Activated T-helper 1 cell treated with anti-CD3 and anti-CD28 coated beads, Interleukin-12 subunit alpha, Interleukin-12 subunit beta, Interleukin-2, Interleukin-4 antibody, amounts not matched to agents 30 ng/mL and 10 ng/mL and 1 ng/mL, durations not matched to agents 14 hours and 24 hours and 36 hours (primary cell): ENCODE measurements at regions of chr16 and their contacts with region 1.

Region 1: GRCh38 chr16:69465083-69465721 is 40.8 kb downstream of the CYB5B start:
- DNase-seq: peak; percentile 18
- H3K4me3 Mint-ChIP-seq: peak overlapping the region; percentile 45
- H3K27ac Mint-ChIP-seq: peak overlapping the region; percentile 75
- H3K4me1 Mint-ChIP-seq: peaks cover 55% of the 10 kb centered on the region
- H3K27me3 Mint-ChIP-seq: no peaks in the 10 kb centered on the region

Region 2: GRCh38 chr16:69443927-69444631 is 21.1 kb before region 1 on chr16:
- intact Hi-C with region 1: loop called (anchors 2 kb)
- DNase-seq: no peak
- H3K4me3 Mint-ChIP-seq: peak overlapping the region; percentile 74
- H3K27ac Mint-ChIP-seq: peak overlapping the region; percentile 90
- H3K4me1 Mint-ChIP-seq: peaks cover 54% of the 10 kb centered on the region
- H3K27me3 Mint-ChIP-seq: no peaks in the 10 kb centered on the region

Region 3: DNA sequence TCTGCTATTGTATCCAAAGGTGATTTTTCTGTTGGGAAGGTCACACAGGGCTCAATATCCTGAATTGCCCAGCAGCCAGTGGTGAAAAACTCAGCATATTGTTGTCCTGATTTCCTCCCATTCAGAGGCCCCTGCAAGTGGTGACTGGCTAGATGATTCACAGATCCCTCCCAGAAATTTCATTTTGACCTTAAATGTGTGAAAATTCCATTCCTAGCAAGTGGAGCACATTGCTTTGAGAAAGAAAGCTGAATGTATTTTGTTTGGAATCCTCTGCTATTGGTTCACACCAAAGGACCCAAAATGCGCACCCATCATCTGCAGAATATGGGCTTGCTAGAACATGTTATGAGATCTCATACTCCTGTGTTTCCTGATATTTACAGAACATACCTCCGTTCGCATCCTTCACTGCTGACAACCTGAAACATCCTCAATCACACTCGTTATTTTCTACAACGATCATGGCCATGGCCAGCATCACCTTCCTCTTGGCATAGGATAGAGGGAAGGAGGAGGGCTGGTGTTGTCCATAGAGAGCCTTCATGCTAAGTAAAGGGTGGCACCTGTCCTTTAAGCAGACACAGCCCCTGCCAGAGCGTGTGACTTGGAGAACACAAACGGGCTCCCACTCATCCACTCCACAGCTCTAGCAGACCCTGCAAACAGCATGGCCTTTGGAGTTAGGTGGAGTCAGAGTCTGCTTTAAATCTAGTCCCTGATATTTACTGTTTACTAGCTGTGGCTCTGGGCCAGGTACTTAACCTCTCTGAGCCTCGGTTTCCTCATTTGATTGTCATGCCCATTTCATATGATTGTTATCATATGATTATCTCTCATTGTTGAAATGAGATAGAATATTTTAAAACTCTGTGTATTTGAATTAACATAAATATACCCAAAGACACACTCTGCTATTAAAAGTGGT is 70.2 kb after region 1 on chr16:
- intact Hi-C with region 1: loop called (anchors 2 kb)
- DNase-seq: no peak
- H3K4me3 Mint-ChIP-seq: no peak overlapping the region
- H3K27ac Mint-ChIP-seq: no peak overlapping the region
- H3K4me1 Mint-ChIP-seq: peaks cover 19% of the 10 kb centered on the region
- H3K27me3 Mint-ChIP-seq: no peaks in the 10 kb centered on the region